GM23248 (cell line): ENCODE measurements at regions of chr5 and their contacts with region 1.

Region 1: GRCh38 chr5:54217826-54218503 is 92.4 kb downstream of the ARL15 start:
- DNase-seq: peak; percentile 72
- H3K4me3 ChIP-seq: no peak overlapping the region
- H3K27ac ChIP-seq: no peak overlapping the region
- H3K4me1 ChIP-seq: 0 out of 2 replicates have a peak, but pooled peaks cover 8% of the 10 kb centered on the region
- H3K27me3 ChIP-seq: no peaks in the 10 kb centered on the region

Region 2: DNA sequence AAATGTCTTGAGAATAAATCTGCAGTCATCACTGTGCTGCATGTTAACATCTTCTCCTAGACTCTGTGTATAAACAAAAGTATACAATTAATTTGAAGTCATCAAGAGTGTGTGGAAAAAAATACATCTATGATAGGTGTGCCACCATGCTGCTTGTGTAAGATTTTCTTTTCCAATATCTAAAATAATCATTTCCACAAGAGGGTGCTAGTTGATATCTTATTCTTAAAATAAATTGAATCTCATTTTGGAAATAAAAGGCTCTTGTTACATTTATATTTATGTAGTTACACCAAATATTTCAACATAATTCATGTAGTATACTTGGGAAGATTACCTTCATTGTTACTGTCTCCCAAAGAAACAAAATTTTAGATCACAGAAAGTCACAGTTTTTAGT is 1094.3 kb before region 1 on chr5:
- in situ Hi-C with region 1: loop called (anchors 10 kb)
- DNase-seq: peak; percentile 51
- H3K4me3 ChIP-seq: no peak overlapping the region
- H3K27ac ChIP-seq: no peak overlapping the region
- H3K4me1 ChIP-seq: peaks cover 11% of the 10 kb centered on the region; the same call in 1 of the 2 replicates
- H3K27me3 ChIP-seq: no peaks in the 10 kb centered on the region

Region 3: GRCh38 chr5:53478411-53479044 is 739.4 kb before region 1 on chr5:
- in situ Hi-C with region 1: loop called (anchors 10 kb)
- DNase-seq: peak; percentile 60
- H3K4me3 ChIP-seq: peak overlapping the region; percentile 95
- H3K27ac ChIP-seq: no peak overlapping the region
- H3K4me1 ChIP-seq: 0 out of 2 replicates have a peak, but pooled peaks cover 8% of the 10 kb centered on the region
- H3K27me3 ChIP-seq: no peaks in the 10 kb centered on the region

Region 4: GRCh38 chr5:53936481-53937352 is 281.2 kb before region 1 on chr5:
- in situ Hi-C with region 1: no loop called
- DNase-seq: peak; percentile 13
- H3K4me3 ChIP-seq: no peak overlapping the region
- H3K27ac ChIP-seq: no peak overlapping the region
- H3K4me1 ChIP-seq: peaks cover 39% of the 10 kb centered on the region
- H3K27me3 ChIP-seq: no peaks in the 10 kb centered on the region